ENCODE measurements at regions of chr15 and their contacts with region 1.

Region 1: DNA sequence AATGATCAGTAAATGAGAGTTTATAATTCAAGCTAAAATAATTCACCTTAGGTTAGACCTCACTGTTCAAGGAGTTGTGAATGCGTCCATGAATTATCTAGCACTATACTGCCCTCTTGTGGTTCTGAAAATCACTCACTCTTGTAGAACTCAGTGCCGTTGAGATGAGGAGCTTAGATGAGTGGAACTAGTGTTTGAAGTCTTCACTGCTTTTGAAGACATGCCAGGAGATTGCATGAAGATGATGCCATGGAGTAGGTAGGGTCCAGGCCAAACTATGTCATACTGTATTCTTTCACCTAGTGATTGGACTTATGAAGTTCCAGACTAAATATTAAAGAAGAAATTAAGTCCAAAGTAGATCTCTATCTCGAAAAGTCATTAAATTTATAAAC is 28.8 kb downstream of the LYSMD4 start:
- DNase-seq: peak; percentile 78 to 90
- ATAC-seq: peak; percentile 78 to 95
- H3K4me3 ChIP-seq: no peak overlapping the region
- H3K27ac ChIP-seq: peak overlapping the region in 1 of 2 experiments; percentile 71; a peak in 2 of 6 replicates
- H3K4me1 ChIP-seq: peaks cover 35% of the 10 kb centered on the region
- CTCF ChIP-seq: peak; percentile 84
- EP300 ChIP-seq: no peak
- POLR2A ChIP-seq: no peak
- RAD21 ChIP-seq: peak; percentile 93 to 95

Region 2: GRCh38 chr15:99250494-99251435 is 453.7 kb before region 1 on chr15:
- CTCF ChIA-PET with region 1: interaction called, 13 read pairs
- POLR2A ChIA-PET with region 1: interaction called, 5 read pairs
- DNase-seq: peak; percentile 92 to 99
- ATAC-seq: peak; percentile 91 to 96
- H3K4me3 ChIP-seq: peak overlapping the region; percentile 76
- H3K27ac ChIP-seq: peak overlapping the region; percentile 91
- H3K4me1 ChIP-seq: peaks cover 15% of the 10 kb centered on the region; the same call in 2 of the 3 replicates
- CTCF ChIP-seq: no peak
- EP300 ChIP-seq: no peak
- POLR2A ChIP-seq: peak; percentile 62
- RAD21 ChIP-seq: no peak

Region 3: GRCh38 chr15:99315636-99316035 is 388.8 kb before region 1 on chr15:
- CTCF ChIA-PET with region 1: interaction called, 11 read pairs
- POLR2A ChIA-PET with region 1: no interaction called
- DNase-seq: no peak
- ATAC-seq: no peak
- H3K4me3 ChIP-seq: no peak overlapping the region
- H3K27ac ChIP-seq: no peak overlapping the region
- H3K4me1 ChIP-seq: peaks cover 6% of the 10 kb centered on the region
- CTCF ChIP-seq: no peak
- EP300 ChIP-seq: no peak
- POLR2A ChIP-seq: no peak
- RAD21 ChIP-seq: no peak

Region 4: DNA sequence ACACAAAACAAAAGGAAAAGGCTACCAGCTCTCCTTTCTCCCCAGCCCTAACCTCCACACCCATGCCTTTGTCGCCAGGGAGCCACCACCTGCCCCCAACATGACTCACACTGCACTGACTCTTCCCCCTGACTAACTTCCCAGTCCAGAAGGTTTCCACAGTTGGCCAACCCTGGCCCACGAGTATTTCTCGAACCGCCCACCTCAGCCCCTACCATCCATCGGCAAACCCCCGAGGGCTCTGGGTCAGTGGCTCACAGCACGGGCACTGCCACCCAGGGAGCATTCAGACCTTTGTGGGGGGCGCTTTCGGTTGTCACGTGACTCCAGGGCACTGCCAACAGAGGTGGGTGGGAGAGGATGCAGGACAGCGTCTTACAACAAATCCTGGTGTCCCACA is 300.8 kb before region 1 on chr15:
- CTCF ChIA-PET with region 1: interaction called, 94 read pairs
- POLR2A ChIA-PET with region 1: no interaction called
- DNase-seq: no peak
- ATAC-seq: peak; percentile 7 to 9; a peak in 1 of 6 replicates
- H3K4me3 ChIP-seq: no peak overlapping the region
- H3K27ac ChIP-seq: no peak overlapping the region
- H3K4me1 ChIP-seq: peaks cover 24% of the 10 kb centered on the region
- CTCF ChIP-seq: no peak
- EP300 ChIP-seq: no peak
- POLR2A ChIP-seq: no peak
- RAD21 ChIP-seq: no peak

Region 5: DNA sequence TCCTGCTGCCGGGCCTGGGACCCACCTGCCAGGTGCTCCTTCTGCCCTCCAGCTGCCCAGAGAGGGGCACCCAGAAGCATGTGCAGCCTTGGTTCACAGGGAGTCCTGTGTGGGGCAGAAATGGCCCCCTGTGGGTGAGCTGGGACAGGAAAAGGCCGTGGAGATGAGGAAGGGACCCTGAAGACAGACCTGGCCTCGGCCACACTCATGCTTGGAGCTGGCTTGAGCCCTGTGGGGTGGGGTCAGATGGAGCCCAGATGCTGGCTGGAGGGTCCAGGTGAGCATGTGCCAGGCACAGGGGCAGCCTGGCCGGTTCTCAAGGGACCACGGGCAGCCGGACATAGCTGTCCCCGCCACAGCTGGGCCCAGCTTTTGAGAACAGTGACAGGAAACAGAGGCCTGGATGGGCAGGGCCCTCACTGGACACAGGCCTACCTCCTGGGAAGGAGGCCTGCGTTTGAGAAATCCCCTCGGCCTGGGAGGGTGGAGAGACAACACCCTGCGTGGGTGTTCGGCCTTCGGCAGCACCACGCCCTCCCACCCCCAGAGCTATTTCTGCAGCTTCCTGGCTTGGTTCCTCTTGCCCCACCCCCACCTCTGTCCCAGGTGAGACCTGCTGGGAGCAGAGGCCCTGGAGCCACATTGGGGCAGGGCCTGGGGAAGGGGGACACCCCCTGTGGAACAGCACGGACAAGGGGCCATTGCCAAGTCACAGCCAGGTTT is 271.2 kb before region 1 on chr15:
- CTCF ChIA-PET with region 1: interaction called, 17 read pairs
- POLR2A ChIA-PET with region 1: no interaction called
- DNase-seq: no peak
- ATAC-seq: no peak
- H3K4me3 ChIP-seq: no peak overlapping the region
- H3K27ac ChIP-seq: 0 out of 6 replicates have a peak overlapping the region, but pooled peaks of 1 of the 2 experiments have one; percentile 6
- H3K4me1 ChIP-seq: no peaks in the 10 kb centered on the region
- CTCF ChIP-seq: no peak
- EP300 ChIP-seq: no peak
- POLR2A ChIP-seq: no peak
- RAD21 ChIP-seq: no peak

Region 6: DNA sequence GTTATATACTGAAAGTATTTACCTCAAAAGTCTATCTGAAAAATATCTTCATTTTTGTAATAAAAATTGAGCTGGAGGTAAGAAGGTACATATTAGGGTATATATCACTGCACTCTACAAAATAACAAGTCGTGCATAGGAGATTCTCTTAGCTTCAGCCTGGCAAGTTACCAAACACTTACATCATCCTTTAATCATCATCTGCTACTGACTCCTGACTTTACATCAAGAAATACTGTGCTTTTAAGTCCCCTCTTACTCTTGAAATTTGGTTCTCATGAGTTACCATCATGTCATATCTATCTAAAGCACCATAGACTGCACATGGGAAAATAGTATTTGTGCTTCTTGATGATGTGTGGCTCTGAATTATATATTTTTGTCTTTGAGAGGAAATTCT is 22.0 kb before region 1 on chr15:
- CTCF ChIA-PET with region 1: interaction called, 23 read pairs
- POLR2A ChIA-PET with region 1: no interaction called
- DNase-seq: peak in 1 of 2 experiments; percentile 19
- ATAC-seq: no peak
- H3K4me3 ChIP-seq: no peak overlapping the region
- H3K27ac ChIP-seq: no peak overlapping the region
- H3K4me1 ChIP-seq: peaks cover 9% of the 10 kb centered on the region; the same call in 2 of the 3 replicates
- CTCF ChIP-seq: no peak
- EP300 ChIP-seq: no peak
- POLR2A ChIP-seq: no peak
- RAD21 ChIP-seq: no peak

Region 7: GRCh38 chr15:99741835-99742234 is 37.4 kb after region 1 on chr15:
- CTCF ChIA-PET with region 1: interaction called, 18 read pairs
- POLR2A ChIA-PET with region 1: no interaction called
- DNase-seq: no peak
- ATAC-seq: no peak
- H3K4me3 ChIP-seq: no peak overlapping the region
- H3K27ac ChIP-seq: no peak overlapping the region
- H3K4me1 ChIP-seq: no peaks in the 10 kb centered on the region
- CTCF ChIP-seq: no peak
- EP300 ChIP-seq: no peak
- POLR2A ChIP-seq: no peak
- RAD21 ChIP-seq: no peak